K562 (cell line): ENCODE measurements at regions of chr1 and their contacts with region 1.

Region 1: GRCh38 chr1:36160949-36161485 is 5.1 kb downstream of the MAP7D1 start:
- DNase-seq: peak; percentile 65 to 72 (median 72)
- ATAC-seq: peak; percentile 64
- H3K4me3 ChIP-seq: peak overlapping the region; percentile 37
- H3K27ac ChIP-seq: peak overlapping the region; percentile 76
- H3K4me1 ChIP-seq: peaks cover 42 to 55% of the 10 kb centered on the region in 2 experiments
- H3K27me3 ChIP-seq: no peaks in the 10 kb centered on the region
- CTCF ChIP-seq: peak; percentile 60 to 76 (median 63)
- EP300 ChIP-seq: 0 out of 2 replicates have a peak, but pooled peaks have one; percentile 17
- POLR2A ChIP-seq: peak; percentile 70
- RAD21 ChIP-seq: peak; percentile 13 to 48; a peak in 3 of 4 replicates

Region 2: DNA sequence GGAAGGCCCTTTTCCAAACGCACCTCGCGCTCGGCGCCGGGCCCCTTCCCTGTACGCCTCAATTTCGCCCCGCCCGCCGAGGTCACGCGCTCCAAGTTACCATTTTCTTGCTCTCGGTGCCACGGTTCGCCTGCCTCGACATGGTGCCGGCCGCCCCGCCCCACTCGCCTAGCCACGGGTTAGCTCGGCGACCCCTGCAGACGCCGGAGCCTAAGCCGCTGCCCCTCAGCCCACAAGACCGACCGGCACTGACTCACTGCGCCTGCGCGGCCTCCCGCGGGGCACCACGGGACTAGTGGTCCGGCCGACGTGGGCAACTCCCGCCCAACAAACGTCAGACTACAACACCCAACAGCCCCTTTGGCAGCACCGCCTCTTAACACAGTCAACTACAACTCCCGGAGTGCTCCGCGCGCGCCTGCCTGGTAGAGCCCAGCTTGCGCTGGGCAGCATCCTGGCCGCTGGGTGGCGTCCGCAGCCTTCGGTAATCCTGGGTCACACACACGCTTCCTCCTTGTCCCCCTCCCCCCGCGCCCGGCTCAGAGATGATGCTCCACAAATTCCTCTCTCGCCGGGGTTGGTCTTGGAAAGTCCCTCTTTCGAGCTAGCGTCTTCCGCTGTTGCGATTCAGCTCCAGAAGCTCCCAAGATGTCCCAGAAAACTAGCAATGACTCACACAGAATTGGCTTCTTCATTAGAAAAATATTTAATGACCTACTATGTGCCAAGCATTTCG is 11.6 kb before region 1 on chr1 and contains the start of gene TRAPPC3:
- CTCF ChIA-PET with region 1: interaction called, 4 read pairs
- POLR2A ChIA-PET with region 1: interaction called, 35 read pairs
- in situ Hi-C with region 1: no loop called
- intact Hi-C with region 1: no loop called
- DNase-seq: peak; percentile 98 to 100 (median 99)
- ATAC-seq: peak; percentile 95
- H3K4me3 ChIP-seq: peak within 1 kb of the TSS; percentile 69
- H3K27ac ChIP-seq: peak within 1 kb of the TSS; percentile 87
- H3K4me1 ChIP-seq: peaks cover 31 to 34% of the 10 kb centered on the region in 2 experiments
- H3K27me3 ChIP-seq: no peaks in the 10 kb centered on the region
- CTCF ChIP-seq: peak; percentile 97 to 99 (median 99)
- EP300 ChIP-seq: peak; percentile 43; the same call in 1 of the 2 replicates
- POLR2A ChIP-seq: peak; percentile 95
- RAD21 ChIP-seq: peak; percentile 99 to 100
- polyA plus RNA-seq, gene TRAPPC3: 20.6 to 41.8 TPM

Region 3: DNA sequence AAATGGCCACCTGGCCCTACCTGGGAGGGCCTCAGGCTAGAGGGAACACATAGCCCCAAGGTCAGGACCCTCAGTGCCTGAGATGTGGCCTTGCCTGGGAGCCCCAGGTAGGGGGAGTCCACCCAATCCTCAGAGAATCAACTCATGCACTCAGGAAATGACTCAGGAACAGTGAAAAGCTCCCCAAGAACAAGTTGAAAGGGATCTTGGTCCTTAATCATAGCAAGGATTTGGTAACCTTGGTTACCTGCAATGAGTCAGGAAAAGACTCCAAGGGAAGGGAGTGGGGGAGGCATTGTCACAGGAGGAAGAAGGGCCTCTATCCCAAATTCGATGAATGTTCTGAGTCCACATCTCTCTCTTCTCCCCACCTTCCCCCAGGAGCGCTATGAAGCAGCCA is 12.0 kb after region 1 on chr1:
- CTCF ChIA-PET with region 1: no interaction called
- POLR2A ChIA-PET with region 1: interaction called, 42 read pairs
- in situ Hi-C with region 1: no loop called
- intact Hi-C with region 1: no loop called
- DNase-seq: no peak
- ATAC-seq: no peak; the same call in 2 of the 3 replicates
- H3K4me3 ChIP-seq: no peak overlapping the region
- H3K27ac ChIP-seq: no peak overlapping the region
- H3K4me1 ChIP-seq: peaks cover 0 to 6% of the 10 kb centered on the region in 2 experiments; a peak in 1 of 5 replicates
- H3K27me3 ChIP-seq: no peaks in the 10 kb centered on the region
- CTCF ChIP-seq: no peak
- EP300 ChIP-seq: no peak
- POLR2A ChIP-seq: no peak
- RAD21 ChIP-seq: no peak